BJ (cell line): ENCODE measurements at regions of chr18 and their contacts with region 1.

Region 1: DNA sequence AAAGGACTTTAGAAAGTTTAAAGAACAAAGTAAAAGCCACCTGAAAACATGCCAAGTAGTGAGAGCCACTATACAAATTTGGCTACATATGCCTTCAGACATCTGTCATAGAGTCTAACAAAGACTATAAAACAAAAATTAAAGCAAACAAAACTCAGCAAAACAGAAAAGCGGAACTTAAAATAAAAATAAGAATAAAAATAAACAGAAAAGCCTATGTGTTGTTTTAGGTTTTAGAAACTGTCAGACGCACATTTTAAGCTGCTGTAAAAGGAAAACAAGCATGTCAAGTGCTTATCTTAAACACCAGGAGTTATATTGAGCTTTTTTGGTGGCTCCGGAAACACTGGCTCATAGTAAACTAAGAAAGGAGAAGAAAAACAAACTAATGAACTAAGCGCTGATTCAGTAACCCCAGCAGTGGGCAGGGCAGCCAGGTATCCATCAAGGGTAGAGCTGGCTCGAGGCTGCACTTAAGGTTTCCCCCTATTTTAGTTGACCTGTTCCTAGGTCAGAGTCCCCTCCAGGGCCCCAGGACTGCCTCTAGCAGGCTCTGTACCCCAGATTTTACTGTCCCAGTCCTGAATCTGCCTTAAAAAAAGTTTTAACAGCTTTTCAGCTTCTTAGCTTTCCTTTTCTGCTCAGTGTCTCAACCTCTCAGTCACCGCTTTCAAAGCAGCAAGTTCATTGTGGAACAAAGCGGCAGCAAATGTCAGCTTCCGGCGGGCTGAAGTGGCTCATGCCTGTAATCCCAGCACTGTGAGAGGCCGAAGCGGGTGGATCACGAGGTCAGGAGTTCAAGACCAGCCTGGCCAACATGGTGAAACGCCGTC is 15.4 kb upstream of the RMC1 start:
- DNase-seq: no peak
- H3K4me3 ChIP-seq: no peak overlapping the region
- H3K27me3 ChIP-seq: no peaks in the 10 kb centered on the region
- CTCF ChIP-seq: no peak

Region 2: GRCh38 chr18:23503038-23503962 is 15.3 kb after region 1 on chr18 and contains the start of gene RMC1:
- CTCF ChIA-PET with region 1: interaction called, 25 read pairs
- POLR2A ChIA-PET with region 1: no interaction called
- DNase-seq: no peak
- H3K4me3 ChIP-seq: peak within 1 kb of the TSS; percentile 91
- H3K27me3 ChIP-seq: no peaks in the 10 kb centered on the region
- CTCF ChIP-seq: no peak
- polyA plus RNA-seq, gene RMC1: 10.8 and 15.1 TPM in 2 replicates

Region 3: GRCh38 chr18:23693845-23694244 is 205.9 kb after region 1 on chr18:
- CTCF ChIA-PET with region 1: no interaction called
- POLR2A ChIA-PET with region 1: no interaction called
- DNase-seq: no peak
- H3K4me3 ChIP-seq: no peak overlapping the region
- H3K27me3 ChIP-seq: no peaks in the 10 kb centered on the region
- CTCF ChIP-seq: no peak